ENCODE measurements at regions of chr7 and their contacts with region 1.

Region 1: DNA sequence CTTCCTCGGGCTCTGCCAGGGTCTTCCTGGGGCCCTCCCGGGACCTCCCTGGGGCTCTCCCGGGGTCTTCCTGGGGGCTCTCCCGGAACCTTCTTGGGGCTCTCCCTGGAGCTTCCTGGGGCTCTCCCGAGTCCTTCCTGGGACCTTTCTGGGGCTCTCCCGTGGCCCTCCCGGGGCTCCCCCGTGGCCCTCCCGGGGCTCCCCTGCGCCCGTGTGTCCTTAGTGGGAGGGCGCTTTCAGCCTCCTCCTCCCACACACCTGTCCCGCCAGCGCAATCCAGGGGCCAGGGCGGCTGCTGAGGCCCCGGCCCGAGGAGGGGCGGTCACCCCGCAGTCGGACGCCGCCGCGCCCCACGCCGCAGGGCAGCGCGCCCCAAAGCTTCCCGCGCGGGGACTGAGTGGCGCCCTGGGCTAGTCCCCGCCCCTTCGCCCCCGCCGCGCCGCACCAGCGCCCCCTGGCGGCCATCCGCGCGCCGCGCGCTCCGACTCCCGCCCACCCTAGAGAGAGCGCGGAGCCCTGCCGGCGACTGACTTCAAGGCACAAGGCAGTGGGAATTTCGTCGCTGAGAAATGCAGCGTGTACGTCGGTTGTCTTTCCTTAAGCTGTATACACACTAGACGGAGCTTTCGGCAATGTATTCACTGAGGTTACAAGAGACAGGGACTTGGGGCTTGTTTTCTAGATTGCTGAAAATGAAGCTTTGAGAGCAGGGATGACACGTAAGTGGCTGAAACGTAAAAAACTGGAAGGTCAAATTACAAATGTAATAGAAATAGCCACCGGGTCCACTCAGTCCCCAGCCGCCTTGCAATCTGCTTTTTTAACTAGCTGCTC is 47.1 kb downstream of the INSIG1 start:
- DNase-seq: peak; percentile 78
- H3K4me3 Mint-ChIP-seq: peak overlapping the region; percentile 20
- H3K27ac Mint-ChIP-seq: peak overlapping the region; percentile 12
- H3K4me1 Mint-ChIP-seq: peaks cover 3% of the 10 kb centered on the region
- H3K27me3 Mint-ChIP-seq: peaks cover 11% of the 10 kb centered on the region

Region 2: DNA sequence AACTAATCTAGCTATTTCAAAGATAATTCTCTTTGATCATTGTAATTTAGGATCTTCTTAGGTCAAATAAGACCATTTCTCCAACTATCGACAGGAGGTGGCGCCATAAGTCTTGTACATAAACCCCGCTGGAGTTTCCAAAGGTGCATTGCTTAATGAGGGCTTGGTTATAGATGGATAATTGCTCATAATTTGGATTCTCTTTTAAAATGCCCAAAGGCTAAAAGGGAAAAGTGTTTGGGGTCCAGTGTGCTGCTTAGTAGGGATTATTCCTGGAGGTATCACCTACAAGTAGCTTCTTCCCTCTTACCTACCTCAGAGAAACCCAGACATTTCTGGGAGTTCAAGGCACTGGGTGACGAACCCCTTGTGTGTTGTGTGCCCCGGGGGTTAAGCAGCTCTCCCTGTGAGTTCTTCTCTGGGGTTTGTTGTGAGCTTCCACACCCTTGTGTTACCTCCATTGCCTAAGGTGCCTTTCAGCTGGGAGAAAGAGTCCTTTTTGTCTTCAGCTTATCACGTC is 417.1 kb before region 1 on chr7:
- CTCF ChIA-PET with region 1: interaction called, 16 read pairs
- POLR2A ChIA-PET with region 1: no interaction called
- DNase-seq: peak; percentile 88
- H3K4me3 Mint-ChIP-seq: peak overlapping the region; percentile 84
- H3K27ac Mint-ChIP-seq: peak overlapping the region; percentile 96
- H3K4me1 Mint-ChIP-seq: peaks cover 22% of the 10 kb centered on the region
- H3K27me3 Mint-ChIP-seq: peaks cover 3% of the 10 kb centered on the region

Region 3: GRCh38 chr7:155188821-155189581 is 155.8 kb before region 1 on chr7:
- CTCF ChIA-PET with region 1: interaction called, 13 read pairs
- POLR2A ChIA-PET with region 1: no interaction called
- DNase-seq: no peak
- H3K4me3 Mint-ChIP-seq: no peak overlapping the region
- H3K27ac Mint-ChIP-seq: no peak overlapping the region
- H3K4me1 Mint-ChIP-seq: peaks cover 10% of the 10 kb centered on the region
- H3K27me3 Mint-ChIP-seq: no peaks in the 10 kb centered on the region

Region 4: DNA sequence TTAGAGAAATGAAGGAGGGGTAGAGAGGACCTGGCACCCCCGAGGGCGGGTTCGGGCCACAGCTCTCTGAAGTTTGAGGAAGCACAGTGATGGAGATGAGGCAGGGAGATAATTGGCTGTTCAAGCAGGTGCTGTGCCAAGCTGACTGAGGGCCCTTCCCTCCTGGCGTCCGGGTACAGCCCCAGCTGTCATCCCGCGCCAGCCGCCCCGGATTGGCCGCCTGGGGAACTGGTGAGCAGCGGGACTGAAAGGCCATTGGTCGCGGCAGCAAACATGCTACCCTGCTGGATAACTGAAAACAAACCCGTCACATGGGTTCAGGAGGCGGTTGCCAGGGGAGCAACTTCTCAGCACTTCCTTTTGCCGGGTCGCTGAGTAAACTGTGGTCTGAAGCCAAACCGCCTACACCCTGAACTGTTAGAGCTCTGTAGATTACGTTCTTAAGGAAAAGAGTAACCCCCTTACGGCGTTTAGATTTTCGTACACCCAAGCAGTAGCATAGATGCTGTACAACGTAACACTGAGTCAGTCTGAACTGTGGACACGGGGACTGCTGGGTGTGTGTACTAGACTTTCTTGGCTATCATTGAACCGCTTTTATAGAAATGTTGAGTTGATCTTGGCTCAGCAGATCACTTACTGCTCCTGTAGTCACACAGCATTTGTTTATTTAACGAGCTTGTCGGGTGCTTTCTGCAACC is 45.8 kb before region 1 on chr7:
- CTCF ChIA-PET with region 1: interaction called, 12 read pairs
- POLR2A ChIA-PET with region 1: no interaction called
- DNase-seq: peak; percentile 98
- H3K4me3 Mint-ChIP-seq: peak overlapping the region; percentile 89
- H3K27ac Mint-ChIP-seq: peak overlapping the region; percentile 97
- H3K4me1 Mint-ChIP-seq: peaks cover 51% of the 10 kb centered on the region
- H3K27me3 Mint-ChIP-seq: no peaks in the 10 kb centered on the region

Region 5: DNA sequence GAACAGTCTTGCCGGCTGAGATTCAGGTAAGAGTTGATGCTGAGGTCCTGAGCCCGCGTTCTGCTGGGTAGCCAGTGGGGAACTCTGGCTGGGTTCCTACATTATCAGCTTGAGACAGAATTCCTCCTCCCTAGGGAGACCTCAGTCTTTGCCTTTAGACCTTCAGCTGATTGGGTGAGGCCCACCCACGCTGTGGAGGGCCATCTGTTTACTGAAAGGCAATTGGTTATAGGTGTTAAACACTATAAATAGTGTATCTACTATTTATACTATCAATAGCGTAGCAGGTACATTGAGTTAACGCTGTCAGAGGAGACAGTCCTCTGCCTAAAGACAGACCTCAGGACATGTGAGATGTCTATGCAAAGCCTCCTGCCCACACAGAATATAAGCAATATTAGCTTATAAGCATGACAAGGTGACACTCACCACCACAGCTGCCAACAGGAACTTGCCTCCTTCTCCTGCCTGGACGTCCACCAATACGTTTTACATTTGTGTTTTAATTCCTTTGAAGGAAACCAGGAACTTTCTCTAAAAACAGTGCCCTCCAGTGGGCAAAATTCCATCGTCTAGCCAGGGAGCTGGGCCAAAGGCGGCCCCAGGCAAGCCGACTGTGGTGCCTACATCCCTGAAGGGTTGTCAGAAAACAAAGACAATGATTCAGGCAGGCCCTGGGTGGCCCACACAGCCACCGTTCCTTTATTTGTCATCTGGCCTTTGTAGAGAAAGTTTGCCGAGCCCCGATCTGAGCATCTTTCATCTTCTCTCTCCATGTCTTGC is 11.7 kb after region 1 on chr7:
- CTCF ChIA-PET with region 1: interaction called, 13 read pairs
- POLR2A ChIA-PET with region 1: no interaction called
- DNase-seq: no peak
- H3K4me3 Mint-ChIP-seq: no peak overlapping the region
- H3K27ac Mint-ChIP-seq: no peak overlapping the region
- H3K4me1 Mint-ChIP-seq: no peaks in the 10 kb centered on the region
- H3K27me3 Mint-ChIP-seq: peaks cover 20% of the 10 kb centered on the region

Region 6: GRCh38 chr7:155392726-155393570 is 48.1 kb after region 1 on chr7:
- CTCF ChIA-PET with region 1: no interaction called
- POLR2A ChIA-PET with region 1: no interaction called
- DNase-seq: no peak
- H3K4me3 Mint-ChIP-seq: no peak overlapping the region
- H3K27ac Mint-ChIP-seq: no peak overlapping the region
- H3K4me1 Mint-ChIP-seq: no peaks in the 10 kb centered on the region
- H3K27me3 Mint-ChIP-seq: peaks cover 6% of the 10 kb centered on the region

Measured in activated CD4-positive, alpha-beta T cell treated with anti-CD3 and anti-CD28 coated beads, Interleukin-2, amount 10 ng/mL, durations not matched to agents 7 days and 5 days (primary cell).